ENCODE measurements at regions of chr5 and their contacts with region 1.

Region 1: GRCh38 chr5:8710426-8710930 is 835.4 kb downstream of the SEMA5A start:
- DNase-seq: no peak
- H3K4me3 ChIP-seq: no peak overlapping the region
- H3K27ac ChIP-seq: no peak overlapping the region
- H3K4me1 ChIP-seq: no peaks in the 10 kb centered on the region
- CTCF ChIP-seq: no peak

Region 2: GRCh38 chr5:8508231-8508630 is 202.2 kb before region 1 on chr5:
- CTCF ChIA-PET with region 1: no interaction called
- POLR2A ChIA-PET with region 1: no interaction called
- intact Hi-C with region 1: no loop called
- DNase-seq: no peak
- H3K4me3 ChIP-seq: no peak overlapping the region
- H3K27ac ChIP-seq: no peak overlapping the region
- H3K4me1 ChIP-seq: no peaks in the 10 kb centered on the region
- CTCF ChIP-seq: no peak

Region 3: GRCh38 chr5:8813180-8813579 is 102.7 kb after region 1 on chr5:
- CTCF ChIA-PET with region 1: no interaction called
- POLR2A ChIA-PET with region 1: no interaction called
- intact Hi-C with region 1: no loop called
- DNase-seq: no peak
- H3K4me3 ChIP-seq: no peak overlapping the region
- H3K27ac ChIP-seq: no peak overlapping the region
- H3K4me1 ChIP-seq: no peaks in the 10 kb centered on the region
- CTCF ChIP-seq: no peak

Region 4: DNA sequence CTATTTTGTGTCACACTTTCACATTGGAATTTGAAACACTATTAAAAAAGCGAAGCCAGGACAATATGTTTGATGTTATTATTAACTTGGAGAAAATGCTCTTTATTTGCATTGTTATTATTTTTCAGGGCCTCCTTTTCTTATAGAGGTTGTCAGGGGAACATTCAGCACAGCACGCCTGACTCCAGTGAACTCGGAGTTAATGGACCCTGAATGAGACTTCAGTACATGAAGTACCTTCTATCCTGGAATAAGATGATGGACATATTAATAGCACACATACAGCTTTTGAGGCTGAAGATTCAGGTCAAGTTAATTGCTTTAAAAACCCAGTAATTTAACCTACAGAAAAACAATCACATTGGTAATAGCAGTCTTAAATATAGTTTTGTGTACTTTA is 182.4 kb after region 1 on chr5:
- CTCF ChIA-PET with region 1: no interaction called
- POLR2A ChIA-PET with region 1: no interaction called
- intact Hi-C with region 1: no loop called
- DNase-seq: no peak
- H3K4me3 ChIP-seq: no peak overlapping the region
- H3K27ac ChIP-seq: no peak overlapping the region
- H3K4me1 ChIP-seq: no peaks in the 10 kb centered on the region
- CTCF ChIP-seq: no peak

Region 5: DNA sequence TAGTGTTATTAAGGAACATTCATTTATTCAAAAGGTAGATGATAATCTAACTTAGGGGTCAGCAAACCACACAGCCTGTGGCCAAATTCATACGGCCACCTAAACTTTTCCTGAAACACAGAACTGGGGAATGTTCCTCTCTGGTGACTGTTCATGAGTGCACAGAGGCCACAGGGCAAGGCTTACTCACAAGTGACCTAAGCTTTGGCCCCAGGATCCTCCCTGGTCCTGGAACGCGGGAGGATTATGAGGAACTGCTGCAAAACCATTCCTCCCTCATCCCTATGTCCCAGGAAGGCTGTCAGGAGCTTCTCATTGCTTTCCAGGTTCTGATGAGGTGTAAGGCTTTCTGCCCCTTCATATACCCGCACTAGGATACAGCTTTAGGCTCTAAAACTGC is 437.8 kb after region 1 on chr5:
- CTCF ChIA-PET with region 1: no interaction called
- POLR2A ChIA-PET with region 1: interaction called, 10 read pairs
- intact Hi-C with region 1: no loop called
- DNase-seq: no peak
- H3K4me3 ChIP-seq: no peak overlapping the region
- H3K27ac ChIP-seq: no peak overlapping the region
- H3K4me1 ChIP-seq: no peaks in the 10 kb centered on the region
- CTCF ChIP-seq: no peak

Region 6: GRCh38 chr5:9698125-9698826 is 987.8 kb after region 1 on chr5:
- CTCF ChIA-PET with region 1: no interaction called
- POLR2A ChIA-PET with region 1: no interaction called
- intact Hi-C with region 1: no loop called
- DNase-seq: no peak
- H3K4me3 ChIP-seq: no peak overlapping the region
- H3K27ac ChIP-seq: no peak overlapping the region
- H3K4me1 ChIP-seq: no peaks in the 10 kb centered on the region
- CTCF ChIP-seq: no peak

Measured in OCI-LY7 (cell line).